Activated CD4-positive, alpha-beta T cell treated with anti-CD3 and anti-CD28 coated beads for 36 hours (primary cell): ENCODE measurements at regions of chr11 and their contacts with region 1.

Region 1: DNA sequence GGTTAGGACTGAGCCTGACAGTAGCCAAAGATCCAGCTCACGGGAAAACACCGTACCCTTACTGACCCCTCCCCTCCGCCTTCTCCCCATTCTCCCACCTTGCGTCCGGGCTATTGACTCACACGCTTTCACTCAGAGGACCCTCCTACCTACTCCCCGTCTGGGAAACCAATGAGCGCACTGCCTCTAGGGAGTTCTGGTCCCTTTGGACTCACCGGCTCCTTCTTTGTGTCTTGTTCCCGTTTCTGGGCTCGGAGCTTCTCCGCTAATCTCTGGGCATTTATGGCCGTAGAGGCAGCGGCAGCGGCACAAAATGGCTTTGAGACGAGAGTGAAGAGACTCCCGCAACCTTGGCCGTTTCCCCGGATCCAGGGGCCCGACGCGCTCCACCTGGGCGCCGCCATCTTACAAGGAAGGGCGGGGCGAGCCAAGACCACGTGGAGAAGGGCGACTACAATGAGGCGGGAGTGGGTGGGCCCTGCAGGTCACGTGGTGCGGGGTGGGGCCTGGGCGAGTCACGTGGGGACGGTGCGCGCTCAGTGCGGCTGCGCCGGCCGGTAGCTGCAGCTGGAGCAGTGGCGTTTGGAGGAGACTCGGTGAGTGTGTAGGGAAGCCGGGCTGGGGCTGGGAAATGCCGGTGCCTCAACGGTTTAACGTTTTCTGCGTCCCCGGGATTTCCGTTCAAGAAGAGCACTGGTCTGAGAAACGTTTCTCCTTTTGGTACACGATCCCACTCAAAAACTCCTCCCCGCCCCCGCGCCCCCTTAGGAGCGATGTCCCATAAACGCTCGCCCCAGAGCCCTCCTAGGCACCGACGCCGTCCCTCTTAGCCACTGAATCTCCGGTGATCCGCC is at the starts of genes FAM118B and RPUSD4:
- DNase-seq: peak; percentile 99
- ATAC-seq: peak; percentile 94
- H3K4me3 Mint-ChIP-seq: peak within 1 kb of the TSS; percentile 98
- H3K27ac Mint-ChIP-seq: peak within 1 kb of the TSS; percentile 93
- H3K4me1 Mint-ChIP-seq: peaks cover 39% of the 10 kb centered on the region
- H3K27me3 Mint-ChIP-seq: no peaks in the 10 kb centered on the region
- total RNA-seq, gene FAM118B: 8.9 to 9.0 TPM
- total RNA-seq, gene RPUSD4: 31.0 to 33.9 TPM

Region 2: DNA sequence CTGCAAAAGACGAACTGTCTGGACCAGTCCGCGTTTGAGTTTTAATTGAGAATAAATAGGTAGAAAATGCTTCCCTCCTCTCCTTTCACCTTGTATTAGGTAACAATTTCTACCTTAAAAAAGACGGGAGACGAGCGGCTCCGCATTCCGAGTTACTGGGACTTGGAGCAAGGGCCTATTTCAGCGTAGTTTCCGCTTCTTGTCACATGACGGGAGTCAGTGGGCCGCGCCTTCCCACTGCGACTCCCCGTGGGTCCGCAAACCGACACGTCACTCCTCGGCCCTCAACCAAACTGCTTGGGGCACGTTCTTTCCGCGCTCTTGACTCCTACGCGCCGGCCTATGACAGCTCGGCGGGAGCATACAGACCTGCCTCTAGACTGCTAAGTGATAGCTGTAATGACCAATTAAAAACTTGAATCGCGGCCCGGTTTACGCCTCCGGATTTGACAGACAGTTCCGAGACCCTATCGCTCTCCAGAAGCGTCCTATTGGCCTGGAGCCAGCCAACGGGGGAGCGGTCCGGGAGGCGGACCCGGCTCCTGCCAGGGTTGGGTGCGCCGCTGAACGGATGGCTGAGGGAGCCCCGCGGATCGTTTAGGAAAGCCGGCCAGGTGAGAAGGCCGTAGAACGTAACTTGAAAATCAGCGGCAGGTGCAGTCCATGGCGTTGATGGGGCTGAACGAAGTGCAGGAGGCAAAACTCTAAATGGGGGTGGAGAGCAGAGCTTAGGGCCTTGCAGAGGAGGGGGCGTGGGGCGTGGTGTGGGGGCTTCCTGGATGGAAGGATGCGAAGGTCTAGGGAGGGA is 619.0 kb before region 1 on chr11 and contains the start of gene STT3A:
- CTCF ChIA-PET with region 1: no interaction called
- POLR2A ChIA-PET with region 1: no interaction called
- intact Hi-C with region 1: loop called in 1 of 2 experiments (anchors 1 kb)
- DNase-seq: peak; percentile 99
- ATAC-seq: peak; percentile 93
- H3K4me3 Mint-ChIP-seq: peak within 1 kb of the TSS; percentile 97
- H3K27ac Mint-ChIP-seq: peak within 1 kb of the TSS; percentile 95
- H3K4me1 Mint-ChIP-seq: peaks cover 48% of the 10 kb centered on the region
- H3K27me3 Mint-ChIP-seq: no peaks in the 10 kb centered on the region
- total RNA-seq, gene STT3A: 127 to 128 TPM

Region 3: DNA sequence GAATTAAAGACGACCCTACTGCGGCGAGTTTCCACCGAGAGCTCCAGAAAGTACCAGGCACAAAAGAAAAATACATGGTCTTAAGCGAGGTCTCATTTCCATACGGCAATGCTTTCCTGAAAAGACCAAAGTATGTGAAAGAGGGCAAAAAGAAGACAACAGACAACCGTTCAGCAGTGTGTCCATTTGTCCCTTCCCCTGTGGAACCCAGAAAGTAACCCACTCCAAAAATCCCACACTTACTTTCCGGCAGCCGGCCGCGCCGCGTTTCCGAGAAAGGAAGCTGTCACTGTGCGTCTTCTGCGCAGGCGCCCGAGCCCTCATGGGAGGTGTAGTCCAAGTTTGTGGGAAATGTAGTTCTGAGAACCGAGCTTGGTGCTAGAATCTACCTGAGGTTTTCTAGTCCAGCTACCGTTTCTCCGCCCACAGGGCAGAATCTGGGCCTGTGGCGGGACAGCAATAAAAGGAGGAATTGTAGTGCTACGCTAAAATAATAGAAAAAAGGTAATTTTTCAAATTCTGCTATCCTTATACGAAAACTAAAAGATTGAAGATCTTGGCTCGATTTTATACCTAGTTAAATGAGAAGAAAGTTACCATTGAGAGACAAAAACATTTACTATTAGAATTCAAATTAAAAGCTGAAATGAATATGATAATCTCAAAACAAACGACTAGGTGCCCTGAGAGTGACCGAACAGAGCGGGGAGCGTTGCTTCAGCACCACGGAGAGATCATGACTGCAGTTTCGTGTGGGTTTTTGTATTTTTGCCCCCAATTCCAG is 308.3 kb before region 1 on chr11 and contains the start of gene PUS3:
- CTCF ChIA-PET with region 1: no interaction called
- POLR2A ChIA-PET with region 1: no interaction called
- intact Hi-C with region 1: loop called in 1 of 2 experiments (anchors 1 kb)
- DNase-seq: peak; percentile 94
- ATAC-seq: peak; percentile 97
- H3K4me3 Mint-ChIP-seq: peak within 1 kb of the TSS; percentile 95
- H3K27ac Mint-ChIP-seq: peak within 1 kb of the TSS; percentile 97
- H3K4me1 Mint-ChIP-seq: peaks cover 35% of the 10 kb centered on the region
- H3K27me3 Mint-ChIP-seq: peaks cover 17% of the 10 kb centered on the region
- total RNA-seq, gene PUS3: 14.3 to 19.9 TPM

Region 4: DNA sequence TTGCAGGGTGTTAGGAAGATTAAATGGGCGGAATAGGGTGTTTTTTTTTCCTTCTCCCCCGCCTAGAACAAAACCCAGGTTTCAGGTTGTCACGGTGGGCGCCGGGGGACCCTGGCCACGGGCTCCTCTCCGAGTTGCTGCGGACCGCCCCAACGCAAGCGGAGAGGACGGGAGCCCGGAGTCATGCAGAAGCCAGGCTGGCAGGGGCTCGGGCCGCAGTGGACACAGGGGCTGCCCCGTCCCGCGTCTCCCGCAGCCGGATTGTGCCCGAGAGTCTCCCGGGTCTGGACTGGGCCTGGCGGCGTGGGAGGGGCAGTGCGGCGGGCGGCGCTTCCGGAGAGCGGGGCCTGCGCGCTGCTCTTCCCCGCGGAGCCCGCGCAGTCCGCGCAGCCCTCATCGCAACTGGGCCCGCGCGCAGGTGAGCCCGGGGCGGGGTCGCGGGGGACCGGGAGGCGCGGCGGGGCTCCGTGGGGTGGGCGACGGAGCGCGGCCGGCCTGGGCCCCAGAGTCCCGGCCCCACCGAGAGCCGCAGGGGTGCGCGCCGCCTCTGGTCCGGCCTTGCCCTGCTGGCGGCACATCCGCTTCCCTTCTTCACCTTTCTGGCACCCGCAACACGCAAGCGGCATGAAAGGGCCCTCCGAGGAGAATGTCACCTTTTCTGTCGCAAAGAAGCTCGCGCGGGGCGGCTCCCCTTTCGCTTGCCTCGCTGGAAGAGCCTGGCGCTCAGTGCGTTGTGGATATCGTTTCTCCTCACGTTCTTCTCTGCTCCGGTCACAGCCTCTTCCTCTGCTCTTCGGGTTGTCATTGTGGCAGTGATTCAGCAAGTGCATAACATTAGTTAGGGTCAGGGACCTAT is 71.5 kb after region 1 on chr11 and contains the start of gene TIRAP:
- CTCF ChIA-PET with region 1: no interaction called
- POLR2A ChIA-PET with region 1: no interaction called
- intact Hi-C with region 1: loop called (anchors 1 to 5 kb)
- DNase-seq: peak; percentile 76
- ATAC-seq: peak; percentile 53
- H3K4me3 Mint-ChIP-seq: peak within 1 kb of the TSS; percentile 81
- H3K27ac Mint-ChIP-seq: peak within 1 kb of the TSS; percentile 94
- H3K4me1 Mint-ChIP-seq: peaks cover 46% of the 10 kb centered on the region
- H3K27me3 Mint-ChIP-seq: no peaks in the 10 kb centered on the region
- total RNA-seq, gene TIRAP: 5.3 to 7.5 TPM

Region 5: GRCh38 chr11:126355324-126355925 is 144.0 kb after region 1 on chr11 and contains the start of gene ST3GAL4:
- CTCF ChIA-PET with region 1: no interaction called
- POLR2A ChIA-PET with region 1: no interaction called
- intact Hi-C with region 1: loop called in 1 of 2 experiments (anchors 1 kb)
- DNase-seq: peak; percentile 86
- ATAC-seq: peak; percentile 77
- H3K4me3 Mint-ChIP-seq: peak within 1 kb of the TSS; percentile 93
- H3K27ac Mint-ChIP-seq: peak within 1 kb of the TSS; percentile 88
- H3K4me1 Mint-ChIP-seq: peaks cover 29% of the 10 kb centered on the region
- H3K27me3 Mint-ChIP-seq: no peaks in the 10 kb centered on the region
- total RNA-seq, gene ST3GAL4: 7.5 to 9.1 TPM